ENCODE measurements at regions of chr10 and their contacts with region 1.

Region 1: DNA sequence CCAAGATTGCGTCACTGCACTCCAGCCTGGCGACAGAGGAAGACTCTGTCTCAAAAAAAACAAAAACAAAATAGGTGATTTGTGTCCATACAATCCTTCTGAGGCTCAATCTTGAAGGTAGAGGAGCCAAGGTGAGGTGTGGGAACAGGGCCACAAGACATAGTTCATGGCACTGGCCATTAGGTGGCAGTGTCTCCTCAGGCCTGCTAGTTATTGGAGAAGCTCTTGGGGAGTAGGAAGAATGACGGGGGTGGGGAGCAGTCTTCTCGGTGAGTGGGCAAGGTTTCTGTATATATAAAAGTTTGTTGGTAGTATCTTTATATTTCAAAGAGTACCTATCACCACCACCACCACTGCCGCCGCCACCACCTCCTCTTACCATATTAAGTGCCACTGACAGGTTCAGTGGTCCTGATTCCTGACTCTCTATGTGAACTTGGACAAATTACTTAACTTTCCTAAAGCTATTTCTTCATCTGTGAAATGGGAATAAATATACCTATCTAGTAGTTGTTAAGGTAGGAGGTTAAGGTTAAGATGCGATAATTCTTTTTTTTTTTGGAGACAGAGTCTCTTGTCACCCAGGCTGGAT is 24.0 kb downstream of the CCSER2 start:
- DNase-seq: peak; percentile 85
- H3K4me3 Mint-ChIP-seq: no peak overlapping the region
- H3K27ac Mint-ChIP-seq: no peak overlapping the region
- H3K4me1 Mint-ChIP-seq: peaks cover 74% of the 10 kb centered on the region
- H3K27me3 Mint-ChIP-seq: no peaks in the 10 kb centered on the region

Region 2: DNA sequence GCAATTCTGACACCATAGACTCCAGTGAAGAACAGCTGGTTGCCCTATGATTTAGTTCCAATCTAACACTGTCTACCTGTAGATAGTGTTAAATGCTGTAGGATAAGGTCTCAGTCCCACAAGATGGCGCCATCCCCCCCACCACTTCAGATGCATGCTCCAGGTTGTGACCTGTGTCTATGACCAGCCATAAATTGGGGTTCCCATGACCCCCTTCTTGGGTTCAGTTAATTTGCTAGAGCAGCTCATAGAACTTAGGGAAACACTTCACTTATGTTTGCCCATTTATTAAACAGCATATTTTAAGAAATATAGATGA is 10.8 kb before region 1 on chr10:
- CTCF ChIA-PET with region 1: interaction called, 25 read pairs
- intact Hi-C with region 1: no loop called
- DNase-seq: peak; percentile 67
- H3K4me3 Mint-ChIP-seq: peak overlapping the region; percentile 59
- H3K27ac Mint-ChIP-seq: peak overlapping the region; percentile 77
- H3K4me1 Mint-ChIP-seq: peaks cover 51% of the 10 kb centered on the region
- H3K27me3 Mint-ChIP-seq: no peaks in the 10 kb centered on the region

Region 3: GRCh38 chr10:84375011-84375410 is 22.7 kb after region 1 on chr10:
- CTCF ChIA-PET with region 1: interaction called, 41 read pairs
- intact Hi-C with region 1: loop called (anchors 1 kb)
- DNase-seq: peak; percentile 70
- H3K4me3 Mint-ChIP-seq: no peak overlapping the region
- H3K27ac Mint-ChIP-seq: peak overlapping the region; percentile 30
- H3K4me1 Mint-ChIP-seq: peaks cover 45% of the 10 kb centered on the region
- H3K27me3 Mint-ChIP-seq: no peaks in the 10 kb centered on the region

Region 4: DNA sequence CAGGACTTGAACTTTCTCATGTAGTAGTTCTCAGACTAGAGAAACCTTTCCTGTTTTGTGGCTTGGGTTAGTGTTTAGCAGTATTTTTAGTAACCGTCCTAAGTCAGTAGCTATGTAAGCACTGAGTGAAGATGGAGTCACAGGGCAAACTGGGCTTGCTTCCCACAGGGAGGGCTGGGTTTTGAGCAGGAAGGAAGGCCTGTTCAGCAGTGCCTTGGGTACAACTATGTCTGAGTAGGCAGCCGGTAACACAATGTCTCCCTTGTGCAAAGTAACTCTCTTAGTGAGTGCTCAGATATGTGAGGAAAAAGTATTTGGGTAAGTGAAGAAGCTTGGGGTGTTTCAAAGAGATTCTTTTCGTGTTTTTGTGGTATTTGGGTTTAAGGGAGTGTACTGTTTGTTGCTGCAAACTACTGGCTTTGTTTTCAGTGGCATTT is 72.4 kb after region 1 on chr10:
- CTCF ChIA-PET with region 1: interaction called, 6 read pairs
- intact Hi-C with region 1: loop called (anchors 2 kb)
- DNase-seq: peak; percentile 52
- H3K4me3 Mint-ChIP-seq: peak overlapping the region; percentile 7
- H3K27ac Mint-ChIP-seq: peak overlapping the region; percentile 68
- H3K4me1 Mint-ChIP-seq: peaks cover 43% of the 10 kb centered on the region
- H3K27me3 Mint-ChIP-seq: no peaks in the 10 kb centered on the region

Region 5: GRCh38 chr10:85175635-85176034 is 823.3 kb after region 1 on chr10:
- CTCF ChIA-PET with region 1: no interaction called
- intact Hi-C with region 1: no loop called
- DNase-seq: no peak
- H3K4me3 Mint-ChIP-seq: no peak overlapping the region
- H3K27ac Mint-ChIP-seq: no peak overlapping the region
- H3K4me1 Mint-ChIP-seq: no peaks in the 10 kb centered on the region
- H3K27me3 Mint-ChIP-seq: no peaks in the 10 kb centered on the region

Region 6: DNA sequence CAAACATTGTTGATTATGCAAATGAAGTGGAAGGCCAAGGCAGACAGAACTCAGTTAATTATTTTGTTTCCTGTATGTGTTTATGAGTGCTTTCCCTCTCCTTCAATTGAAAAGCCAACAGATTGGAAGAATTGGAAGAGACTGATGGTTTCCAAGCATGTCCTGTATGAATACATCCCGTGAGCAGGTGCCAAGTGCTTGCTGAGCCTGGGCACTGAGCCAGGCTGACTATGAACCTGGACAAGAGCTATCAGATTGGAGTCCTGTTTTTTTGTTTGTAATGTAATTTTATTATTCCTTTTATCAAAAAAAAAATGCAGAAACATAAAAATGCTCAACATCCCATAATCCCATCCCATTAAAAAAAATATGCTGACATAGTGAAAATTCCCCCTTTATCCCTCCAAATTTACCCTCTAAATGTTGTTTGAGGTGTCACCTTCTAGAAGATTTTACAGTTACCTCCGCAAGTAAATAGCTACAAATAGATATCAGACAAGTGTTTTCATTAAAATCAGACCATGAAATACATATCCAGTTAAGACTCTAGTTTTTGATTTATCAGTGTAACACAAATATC is 1564.7 kb after region 1 on chr10:
- CTCF ChIA-PET with region 1: no interaction called
- intact Hi-C with region 1: no loop called
- DNase-seq: no peak
- H3K4me3 Mint-ChIP-seq: no peak overlapping the region
- H3K27ac Mint-ChIP-seq: no peak overlapping the region
- H3K4me1 Mint-ChIP-seq: no peaks in the 10 kb centered on the region
- H3K27me3 Mint-ChIP-seq: no peaks in the 10 kb centered on the region

Measured in activated naive CD4-positive, alpha-beta T cell treated with anti-CD3 and anti-CD28 coated beads for 36 hours (primary cell).